PC-3 (cell line): ENCODE measurements at regions of chr1 and their contacts with region 1.

Region 1: DNA sequence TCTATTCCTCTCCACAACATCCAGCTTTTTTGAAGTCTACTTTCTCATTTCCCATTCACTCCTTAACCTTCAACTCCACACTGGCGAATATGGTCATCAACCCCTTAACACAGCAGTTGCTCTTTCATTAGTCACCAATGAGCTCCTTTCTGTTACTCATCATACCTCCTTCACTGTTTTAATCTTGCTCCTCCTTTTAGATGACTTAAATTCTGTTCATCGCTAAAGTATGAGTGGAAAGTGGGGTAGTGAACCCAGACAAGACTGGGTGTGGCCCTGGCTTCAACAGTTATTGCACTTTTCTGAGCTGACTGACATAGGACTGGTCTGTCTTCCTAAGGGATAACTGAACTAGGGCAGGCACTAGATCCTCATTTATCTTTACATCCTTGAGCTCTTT is 51.3 kb downstream of the AKT3 start:
- DNase-seq: peak; percentile 96
- ATAC-seq: peak; percentile 95
- H3K4me3 ChIP-seq: peak overlapping the region; percentile 14; the same call in 1 of the 2 replicates
- H3K27ac ChIP-seq: peak overlapping the region; percentile 76
- H3K4me1 ChIP-seq: peaks cover 27% of the 10 kb centered on the region
- H3K27me3 ChIP-seq: no peaks in the 10 kb centered on the region
- CTCF ChIP-seq: no peak

Region 2: DNA sequence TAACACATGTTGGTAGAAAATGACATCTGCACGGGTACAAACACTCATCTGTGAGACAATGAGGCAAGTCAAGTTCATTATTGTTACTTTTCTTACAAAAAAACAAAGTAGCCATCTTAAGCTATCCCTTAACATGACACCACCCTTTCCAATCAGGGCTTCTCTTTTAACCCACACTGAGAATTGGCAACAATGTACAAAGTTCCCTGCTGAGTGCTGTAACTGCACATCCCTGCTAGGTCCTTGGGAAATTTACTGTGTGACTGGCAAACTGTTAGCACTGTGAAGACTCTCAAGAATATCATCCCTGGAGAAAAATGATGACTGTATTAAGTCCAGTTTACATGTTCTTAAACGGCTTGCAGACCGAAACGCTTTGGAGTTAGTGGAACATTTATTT is 1088.4 kb before region 1 on chr1:
- CTCF ChIA-PET with region 1: no interaction called
- POLR2A ChIA-PET with region 1: no interaction called
- intact Hi-C with region 1: no loop called
- DNase-seq: no peak
- ATAC-seq: no peak
- H3K4me3 ChIP-seq: no peak overlapping the region
- H3K27ac ChIP-seq: no peak overlapping the region
- H3K4me1 ChIP-seq: no peaks in the 10 kb centered on the region
- H3K27me3 ChIP-seq: peaks cover 38% of the 10 kb centered on the region
- CTCF ChIP-seq: no peak

Region 3: GRCh38 chr1:243842978-243843511 is 44.3 kb after region 1 on chr1:
- CTCF ChIA-PET with region 1: no interaction called
- POLR2A ChIA-PET with region 1: no interaction called
- intact Hi-C with region 1: loop called (anchors 2 kb)
- DNase-seq: peak; percentile 82
- ATAC-seq: peak; percentile 98
- H3K4me3 ChIP-seq: no peak overlapping the region
- H3K27ac ChIP-seq: peak overlapping the region; percentile 23
- H3K4me1 ChIP-seq: peaks cover 35% of the 10 kb centered on the region
- H3K27me3 ChIP-seq: no peaks in the 10 kb centered on the region
- CTCF ChIP-seq: no peak